PC-9 (cell line): ENCODE measurements at regions of chr5 and their contacts with region 1.

Region 1: GRCh38 chr5:178732281-178732680 is 1.8 kb upstream of the ZNF354A start:
- DNase-seq: no peak
- H3K4me3 ChIP-seq: no peak overlapping the region
- H3K27ac ChIP-seq: no peak overlapping the region
- H3K4me1 ChIP-seq: no peaks in the 10 kb centered on the region
- H3K27me3 ChIP-seq: no peaks in the 10 kb centered on the region
- CTCF ChIP-seq: no peak

Region 2: DNA sequence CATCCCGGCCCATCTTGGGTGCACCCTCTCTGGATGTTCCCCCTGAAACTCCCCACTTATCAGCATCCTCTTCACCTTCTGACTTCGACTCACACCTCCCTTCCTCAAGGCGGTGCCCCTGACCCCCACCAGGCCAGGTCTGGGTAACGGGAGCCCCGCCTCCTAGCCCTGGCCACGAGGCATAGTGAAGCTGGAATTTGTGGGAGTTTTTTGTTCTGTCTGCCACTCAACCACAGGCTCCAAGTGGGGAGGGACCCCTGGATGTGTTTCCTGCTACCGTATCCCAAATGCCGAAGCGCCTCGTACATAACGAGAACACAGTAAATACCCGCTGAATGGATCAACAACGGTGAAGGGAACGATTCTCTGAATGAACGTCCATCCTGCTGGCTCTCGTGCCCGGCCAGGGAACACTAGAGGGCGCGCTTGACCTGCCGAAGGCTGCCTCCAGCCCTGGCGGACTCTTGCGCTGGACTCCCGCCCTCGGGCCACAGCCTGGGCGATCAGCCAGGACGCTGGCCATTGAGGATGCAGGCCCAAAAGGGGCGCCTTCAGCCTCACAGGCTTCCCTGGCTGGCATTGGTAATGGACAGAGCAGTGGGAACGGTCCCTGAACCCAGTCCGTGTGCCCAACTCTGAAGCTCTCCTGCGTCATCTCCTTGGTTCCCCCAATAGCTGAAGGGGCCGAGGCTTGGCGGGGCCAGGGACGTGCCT is 452.4 kb before region 1 on chr5:
- CTCF ChIA-PET with region 1: no interaction called
- POLR2A ChIA-PET with region 1: no interaction called
- intact Hi-C with region 1: loop called (anchors 10 kb)
- DNase-seq: peak; percentile 48 to 81
- H3K4me3 ChIP-seq: no peak overlapping the region
- H3K27ac ChIP-seq: no peak overlapping the region
- H3K4me1 ChIP-seq: no peaks in the 10 kb centered on the region
- H3K27me3 ChIP-seq: peaks cover 95% of the 10 kb centered on the region
- CTCF ChIP-seq: peak; percentile 87

Region 3: GRCh38 chr5:178626484-178627258 is 105.6 kb before region 1 on chr5 and contains the start of gene CLK4:
- CTCF ChIA-PET with region 1: interaction called, 16 read pairs
- POLR2A ChIA-PET with region 1: interaction called, 7 read pairs
- intact Hi-C with region 1: loop called (anchors 1 kb)
- DNase-seq: peak; percentile 77 to 95
- H3K4me3 ChIP-seq: peak within 1 kb of the TSS; percentile 85
- H3K27ac ChIP-seq: peak within 1 kb of the TSS; percentile 60
- H3K4me1 ChIP-seq: peaks cover 41% of the 10 kb centered on the region
- H3K27me3 ChIP-seq: no peaks in the 10 kb centered on the region
- CTCF ChIP-seq: no peak
- total RNA-seq, gene CLK4: 25.0 and 29.7 TPM in 2 replicates

Region 4: DNA sequence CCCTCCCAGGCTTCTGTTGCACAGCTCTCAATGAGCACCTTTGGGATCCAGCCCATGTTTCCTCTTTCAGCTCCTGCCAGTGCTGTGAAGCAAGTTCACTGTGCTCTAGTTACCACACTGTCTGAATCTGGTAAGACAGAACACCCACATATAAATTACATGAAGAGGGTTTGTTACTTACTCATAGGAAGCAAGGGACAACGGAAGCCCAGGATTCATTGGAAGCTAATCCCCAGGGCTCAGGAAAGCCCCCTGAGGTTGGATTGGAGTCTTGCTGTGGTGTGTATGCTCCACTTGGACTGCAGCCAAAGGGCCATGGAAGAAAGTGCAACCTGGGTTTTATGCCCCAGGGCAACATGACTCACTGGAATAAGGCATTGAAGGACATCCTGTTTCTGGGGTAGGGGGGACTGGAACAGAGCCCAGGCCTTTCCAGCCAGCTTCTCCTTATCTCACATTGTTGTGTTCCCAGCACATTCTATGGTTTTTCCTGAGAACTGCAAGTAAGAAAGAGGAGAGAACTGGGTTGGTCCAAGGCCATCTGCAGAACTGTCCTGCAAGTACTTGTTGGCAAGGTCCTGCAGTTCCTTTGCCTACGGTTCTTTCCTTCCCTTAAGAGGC is 89.8 kb before region 1 on chr5:
- CTCF ChIA-PET with region 1: interaction called, 5 read pairs
- POLR2A ChIA-PET with region 1: no interaction called
- intact Hi-C with region 1: loop called (anchors 1 kb)
- DNase-seq: peak; percentile 97 to 98
- H3K4me3 ChIP-seq: 0 out of 2 replicates have a peak overlapping the region, but pooled peaks have one; percentile 12
- H3K27ac ChIP-seq: peak overlapping the region; percentile 74
- H3K4me1 ChIP-seq: peaks cover 52% of the 10 kb centered on the region
- H3K27me3 ChIP-seq: no peaks in the 10 kb centered on the region
- CTCF ChIP-seq: no peak

Region 5: GRCh38 chr5:178838695-178839685 is 106.7 kb after region 1 on chr5:
- CTCF ChIA-PET with region 1: no interaction called
- POLR2A ChIA-PET with region 1: no interaction called
- intact Hi-C with region 1: loop called (anchors 1 kb)
- DNase-seq: peak; percentile 68 to 75
- H3K4me3 ChIP-seq: no peak overlapping the region
- H3K27ac ChIP-seq: no peak overlapping the region
- H3K4me1 ChIP-seq: no peaks in the 10 kb centered on the region
- H3K27me3 ChIP-seq: peaks cover 3% of the 10 kb centered on the region; the same call in 1 of the 2 replicates
- CTCF ChIP-seq: peak; percentile 71

Region 6: DNA sequence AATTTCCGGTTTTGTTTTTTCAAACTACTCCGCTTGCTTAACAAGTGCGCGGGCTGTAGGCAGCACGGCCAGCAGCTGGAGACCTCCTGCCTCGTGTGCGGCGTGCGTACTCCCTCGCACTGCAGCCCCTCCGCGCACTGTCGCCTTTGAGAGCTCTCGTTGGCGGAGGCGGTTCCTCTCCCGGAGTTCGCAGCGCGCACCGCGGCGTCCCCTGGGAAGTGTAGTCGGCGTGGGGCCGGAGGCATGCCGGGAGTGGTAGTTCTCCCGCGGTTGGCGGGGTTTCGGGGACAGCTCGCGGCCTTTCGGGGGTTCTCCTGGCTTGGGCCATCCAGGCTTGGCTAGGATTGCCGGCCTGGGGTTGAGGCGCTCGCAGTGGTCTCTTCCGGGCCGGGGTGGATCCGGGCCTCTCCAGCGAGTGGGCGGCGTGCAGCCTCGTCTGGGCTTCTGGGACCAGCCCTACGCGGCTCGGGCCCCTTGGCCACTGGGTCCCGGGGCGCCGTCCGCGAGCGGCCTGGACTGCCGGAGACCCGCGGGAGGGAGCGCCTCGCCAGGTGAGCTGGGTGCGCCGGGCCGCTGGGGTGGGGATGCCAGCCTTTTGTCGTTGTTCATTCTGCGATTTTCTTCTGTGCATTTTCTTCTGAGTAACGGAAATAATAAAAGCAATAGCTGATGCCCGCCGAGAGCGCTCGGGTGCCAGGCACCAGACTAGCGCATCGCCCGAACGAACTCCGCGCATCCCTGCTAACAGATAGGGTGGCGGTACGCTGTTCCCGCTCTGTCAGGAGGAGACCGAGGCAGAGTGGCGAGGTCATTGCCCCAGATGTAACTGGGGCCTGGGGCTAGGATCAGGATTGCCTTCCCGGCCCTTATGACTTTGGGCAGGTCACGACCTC is 328.1 kb after region 1 on chr5 and contains the start of gene ZNF354C:
- CTCF ChIA-PET with region 1: interaction called, 3 read pairs
- POLR2A ChIA-PET with region 1: no interaction called
- intact Hi-C with region 1: loop called (anchors 5 kb)
- DNase-seq: peak; percentile 60 to 71
- H3K4me3 ChIP-seq: peak within 1 kb of the TSS; percentile 69
- H3K27ac ChIP-seq: no peak within 1 kb of the TSS
- H3K4me1 ChIP-seq: 0 out of 2 replicates have a peak, but pooled peaks cover 6% of the 10 kb centered on the region
- H3K27me3 ChIP-seq: no peaks in the 10 kb centered on the region
- CTCF ChIP-seq: no peak
- total RNA-seq, gene ZNF354C: 2.5 and 2.7 TPM in 2 replicates

Region 7: DNA sequence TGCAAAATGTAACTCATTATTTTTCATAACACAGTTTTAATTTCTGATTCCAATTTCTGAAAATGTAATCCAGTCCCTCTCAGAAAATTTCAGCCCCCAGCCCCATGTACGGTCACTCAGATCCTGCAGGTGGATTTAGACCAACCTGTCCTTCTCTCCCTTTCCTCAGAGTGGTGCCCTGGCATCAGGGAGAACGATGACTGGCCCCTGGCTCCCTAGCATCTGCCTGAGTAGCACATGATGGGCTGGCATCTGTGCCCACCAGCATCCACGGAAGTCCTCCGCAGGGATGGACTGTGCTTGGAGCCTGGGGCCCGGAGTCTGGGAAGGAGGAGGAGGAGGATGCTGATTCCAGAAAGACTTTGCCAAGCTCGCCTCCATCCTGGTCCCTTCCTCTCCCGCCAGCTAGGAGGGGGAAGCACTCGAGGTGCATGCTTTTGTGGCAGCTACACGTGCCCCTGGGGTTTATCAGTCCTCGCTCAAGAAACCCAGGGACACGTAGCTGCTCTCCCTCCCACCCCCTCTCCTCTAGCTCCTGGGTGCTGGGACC is 763.7 kb after region 1 on chr5:
- CTCF ChIA-PET with region 1: no interaction called
- POLR2A ChIA-PET with region 1: no interaction called
- intact Hi-C with region 1: loop called (anchors 5 kb)
- DNase-seq: peak in 1 of 2 experiments; percentile 21
- H3K4me3 ChIP-seq: no peak overlapping the region
- H3K27ac ChIP-seq: no peak overlapping the region
- H3K4me1 ChIP-seq: no peaks in the 10 kb centered on the region
- H3K27me3 ChIP-seq: peaks cover 74% of the 10 kb centered on the region
- CTCF ChIP-seq: no peak; the same call in 1 of the 2 replicates